ENCODE measurements at regions of chr6 and their contacts with region 1.

Region 1: GRCh38 chr6:4801491-4802110 is 25.4 kb downstream of the CDYL start:
- DNase-seq: no peak
- ATAC-seq: peak; percentile 69
- H3K4me3 Mint-ChIP-seq: peak overlapping the region; percentile 16
- H3K27ac Mint-ChIP-seq: peak overlapping the region; percentile 46
- H3K4me1 Mint-ChIP-seq: peaks cover 82% of the 10 kb centered on the region
- H3K27me3 Mint-ChIP-seq: no peaks in the 10 kb centered on the region
- CTCF ChIP-seq: no peak

Region 2: DNA sequence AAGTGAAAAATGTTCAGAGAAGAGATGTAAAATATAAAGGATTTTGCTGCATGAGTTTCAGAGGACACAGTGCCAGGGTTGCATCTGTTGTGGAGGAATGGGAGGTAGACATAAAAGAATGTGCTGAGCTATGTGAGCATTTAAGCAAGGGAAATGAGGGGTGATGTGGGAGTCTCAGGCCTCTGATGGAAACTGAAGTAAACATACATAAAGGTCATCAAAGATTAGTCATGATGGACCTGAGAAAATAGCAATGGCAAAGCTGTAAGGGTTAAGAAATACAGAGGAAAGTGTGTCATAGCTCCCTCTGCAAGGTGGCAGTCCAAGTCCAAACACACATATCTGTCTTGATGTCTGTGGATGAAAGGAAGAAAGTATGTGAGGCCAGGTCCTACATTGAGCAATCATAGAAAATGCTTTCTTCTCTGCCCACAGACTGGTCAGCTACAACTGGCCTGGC is 359.6 kb before region 1 on chr6:
- CTCF ChIA-PET with region 1: no interaction called
- POLR2A ChIA-PET with region 1: interaction called, 10 read pairs
- intact Hi-C with region 1: no loop called
- DNase-seq: no peak
- ATAC-seq: no peak
- H3K4me3 Mint-ChIP-seq: no peak overlapping the region
- H3K27ac Mint-ChIP-seq: no peak overlapping the region
- H3K4me1 Mint-ChIP-seq: peaks cover 7% of the 10 kb centered on the region
- H3K27me3 Mint-ChIP-seq: no peaks in the 10 kb centered on the region
- CTCF ChIP-seq: no peak

Region 3: DNA sequence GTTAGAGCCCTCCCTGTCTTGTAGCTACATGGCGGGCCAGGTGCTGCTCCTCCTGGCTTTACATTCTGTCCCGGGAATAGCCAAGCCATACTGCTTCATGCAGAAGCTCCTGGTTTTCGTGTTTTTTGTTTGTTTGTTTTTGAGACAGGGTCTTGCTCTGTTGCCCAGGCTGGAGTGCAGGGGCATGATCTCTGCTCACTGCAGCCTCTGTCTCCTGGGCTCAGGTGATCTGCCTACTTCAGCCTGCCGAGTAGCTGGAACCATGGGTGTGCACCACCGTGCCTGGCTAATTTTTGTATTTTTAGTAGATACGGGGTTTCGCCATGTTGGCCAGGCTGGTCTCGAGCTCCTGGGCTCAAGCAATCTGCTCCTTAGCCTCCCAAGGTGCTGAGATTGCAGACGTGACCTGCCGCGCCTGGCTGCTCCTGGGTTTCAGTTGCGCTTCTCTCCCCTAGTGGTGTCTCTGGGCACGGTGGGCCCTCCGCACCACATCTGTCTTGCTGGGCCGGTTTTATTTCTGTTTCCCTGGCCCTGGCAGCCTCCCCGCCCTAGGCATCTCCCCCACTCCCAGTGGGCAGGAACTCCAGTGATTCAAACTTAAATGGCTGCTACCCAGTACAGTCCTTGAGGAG is 12.5 kb before region 1 on chr6:
- CTCF ChIA-PET with region 1: interaction called, 11 read pairs
- POLR2A ChIA-PET with region 1: interaction called, 3 read pairs
- intact Hi-C with region 1: loop called (anchors 2 kb)
- DNase-seq: peak; percentile 50
- ATAC-seq: peak; percentile 99
- H3K4me3 Mint-ChIP-seq: peak overlapping the region; percentile 63
- H3K27ac Mint-ChIP-seq: peak overlapping the region; percentile 39
- H3K4me1 Mint-ChIP-seq: peaks cover 51% of the 10 kb centered on the region
- H3K27me3 Mint-ChIP-seq: no peaks in the 10 kb centered on the region
- CTCF ChIP-seq: no peak

Region 4: GRCh38 chr6:4814212-4814611 is 12.6 kb after region 1 on chr6:
- CTCF ChIA-PET with region 1: interaction called, 3 read pairs
- POLR2A ChIA-PET with region 1: interaction called, 4 read pairs
- intact Hi-C with region 1: loop called (anchors 2 kb)
- DNase-seq: no peak
- ATAC-seq: no peak
- H3K4me3 Mint-ChIP-seq: peak overlapping the region; percentile 35
- H3K27ac Mint-ChIP-seq: no peak overlapping the region
- H3K4me1 Mint-ChIP-seq: peaks cover 67% of the 10 kb centered on the region
- H3K27me3 Mint-ChIP-seq: no peaks in the 10 kb centered on the region
- CTCF ChIP-seq: no peak